ENCODE measurements at regions of chr5 and their contacts with region 1.

Region 1: DNA sequence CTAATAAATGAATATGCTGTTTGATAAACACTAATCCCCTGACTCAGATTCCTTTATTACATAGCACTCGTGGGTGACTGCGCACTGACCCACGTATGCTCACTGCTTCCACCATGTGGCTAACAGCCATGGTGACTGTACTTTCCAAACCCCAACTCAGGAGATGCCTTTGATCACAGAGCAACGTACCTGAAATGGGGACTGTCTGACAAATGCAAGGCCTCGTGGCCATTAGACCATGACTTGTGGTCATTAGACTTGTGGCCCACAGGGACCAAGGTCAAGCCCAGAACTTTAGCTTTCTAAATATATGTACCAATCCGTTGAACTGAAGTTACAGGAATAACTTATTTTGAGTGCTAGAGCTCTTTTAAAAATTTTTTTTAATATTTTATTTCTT is 46.6 kb downstream of the CYFIP2 start:
- DNase-seq: peak; percentile 40 to 54 (median 49)
- H3K4me3 ChIP-seq: no peak overlapping the region
- H3K4me3 Mint-ChIP-seq: no peak overlapping the region
- H3K27ac ChIP-seq: no peak overlapping the region
- H3K27ac Mint-ChIP-seq: no peak overlapping the region
- H3K4me1 ChIP-seq: no peaks in the 10 kb centered on the region
- H3K4me1 Mint-ChIP-seq: no peaks in the 10 kb centered on the region
- H3K27me3 ChIP-seq: no peaks in the 10 kb centered on the region
- H3K27me3 Mint-ChIP-seq: peaks cover 0 to 1% (median 0%) of the 10 kb centered on the region in 3 donors
- CTCF ChIP-seq: peak; percentile 77

Region 2: DNA sequence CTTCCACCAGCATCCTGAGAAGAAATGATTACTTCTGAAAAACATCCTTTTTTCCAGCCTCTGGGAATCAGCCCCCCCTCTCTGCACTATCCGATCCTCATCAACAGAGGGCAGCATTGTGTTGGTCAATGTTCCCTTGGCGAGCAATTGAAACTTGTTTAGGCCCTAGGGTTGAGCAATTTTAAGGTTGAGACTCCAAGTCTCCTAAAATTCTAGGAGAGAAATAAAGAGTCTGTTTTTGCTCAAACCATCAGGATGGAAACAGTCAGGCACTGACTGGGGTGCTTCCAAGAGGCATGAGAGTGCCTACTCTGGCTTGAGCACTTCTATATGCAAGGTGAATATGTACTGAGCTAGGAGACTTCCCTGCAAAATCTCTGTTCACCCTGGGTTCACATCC is 58.9 kb before region 1 on chr5:
- intact Hi-C with region 1: loop called (anchors 2 to 5 kb)
- DNase-seq: peak; percentile 40 to 69 (median 59)
- H3K4me3 ChIP-seq: no peak overlapping the region
- H3K4me3 Mint-ChIP-seq: no peak overlapping the region
- H3K27ac ChIP-seq: no peak overlapping the region
- H3K27ac Mint-ChIP-seq: peak overlapping the region in 1 of 7 donors; percentile 21
- H3K4me1 ChIP-seq: peaks cover 13 to 26% of the 10 kb centered on the region in 2 donors
- H3K4me1 Mint-ChIP-seq: peaks cover 23% of the 10 kb centered on the region
- H3K27me3 ChIP-seq: no peaks in the 10 kb centered on the region
- H3K27me3 Mint-ChIP-seq: peaks cover 0 to 1% (median 0%) of the 10 kb centered on the region in 3 donors
- CTCF ChIP-seq: peak; percentile 99

Measured in CD14-positive monocyte (primary cell).